PC-9 (cell line): ENCODE measurements at regions of chr6 and their contacts with region 1.

Region 1: DNA sequence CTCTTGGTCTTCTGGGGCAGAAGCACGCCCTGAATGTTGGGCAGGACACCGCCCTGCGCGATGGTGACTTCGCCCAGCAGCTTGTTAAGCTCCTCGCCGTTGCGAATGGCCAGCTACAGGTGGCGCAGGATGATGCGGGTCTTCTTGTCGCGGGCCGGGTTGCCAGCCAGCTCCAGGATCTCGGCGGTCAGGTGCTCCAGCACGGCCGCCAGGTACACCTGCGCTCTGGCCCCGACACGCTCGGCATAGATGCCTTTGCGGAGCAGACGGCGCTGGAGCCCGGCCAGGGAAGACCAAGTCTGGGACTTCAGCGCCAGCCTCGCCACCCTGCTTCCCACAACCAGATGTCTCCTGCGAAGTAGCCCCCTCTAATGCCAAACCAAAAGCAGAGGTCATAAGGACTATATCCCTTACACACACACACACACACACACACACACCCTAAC is 8.0 kb upstream of the SLC17A3 start:
- DNase-seq: peak in 1 of 2 experiments; percentile 64
- H3K4me3 ChIP-seq: no peak overlapping the region
- H3K27ac ChIP-seq: no peak overlapping the region
- H3K4me1 ChIP-seq: peaks cover 12% of the 10 kb centered on the region
- H3K27me3 ChIP-seq: no peaks in the 10 kb centered on the region
- CTCF ChIP-seq: no peak

Region 2: GRCh38 chr6:25717866-25718740 is 164.0 kb before region 1 on chr6:
- CTCF ChIA-PET with region 1: no interaction called
- POLR2A ChIA-PET with region 1: no interaction called
- intact Hi-C with region 1: loop called (anchors 2 kb)
- DNase-seq: no peak
- H3K4me3 ChIP-seq: no peak overlapping the region
- H3K27ac ChIP-seq: no peak overlapping the region
- H3K4me1 ChIP-seq: no peaks in the 10 kb centered on the region
- H3K27me3 ChIP-seq: no peaks in the 10 kb centered on the region
- CTCF ChIP-seq: peak; percentile 83

Region 3: GRCh38 chr6:25769986-25770385 is 112.1 kb before region 1 on chr6:
- CTCF ChIA-PET with region 1: no interaction called
- POLR2A ChIA-PET with region 1: no interaction called
- intact Hi-C with region 1: loop called (anchors 5 kb)
- DNase-seq: peak; percentile 69 to 76
- H3K4me3 ChIP-seq: no peak overlapping the region
- H3K27ac ChIP-seq: no peak overlapping the region
- H3K4me1 ChIP-seq: peaks cover 6% of the 10 kb centered on the region
- H3K27me3 ChIP-seq: no peaks in the 10 kb centered on the region
- CTCF ChIP-seq: no peak